ENCODE measurements at regions of chr17 and their contacts with region 1.

Region 1: DNA sequence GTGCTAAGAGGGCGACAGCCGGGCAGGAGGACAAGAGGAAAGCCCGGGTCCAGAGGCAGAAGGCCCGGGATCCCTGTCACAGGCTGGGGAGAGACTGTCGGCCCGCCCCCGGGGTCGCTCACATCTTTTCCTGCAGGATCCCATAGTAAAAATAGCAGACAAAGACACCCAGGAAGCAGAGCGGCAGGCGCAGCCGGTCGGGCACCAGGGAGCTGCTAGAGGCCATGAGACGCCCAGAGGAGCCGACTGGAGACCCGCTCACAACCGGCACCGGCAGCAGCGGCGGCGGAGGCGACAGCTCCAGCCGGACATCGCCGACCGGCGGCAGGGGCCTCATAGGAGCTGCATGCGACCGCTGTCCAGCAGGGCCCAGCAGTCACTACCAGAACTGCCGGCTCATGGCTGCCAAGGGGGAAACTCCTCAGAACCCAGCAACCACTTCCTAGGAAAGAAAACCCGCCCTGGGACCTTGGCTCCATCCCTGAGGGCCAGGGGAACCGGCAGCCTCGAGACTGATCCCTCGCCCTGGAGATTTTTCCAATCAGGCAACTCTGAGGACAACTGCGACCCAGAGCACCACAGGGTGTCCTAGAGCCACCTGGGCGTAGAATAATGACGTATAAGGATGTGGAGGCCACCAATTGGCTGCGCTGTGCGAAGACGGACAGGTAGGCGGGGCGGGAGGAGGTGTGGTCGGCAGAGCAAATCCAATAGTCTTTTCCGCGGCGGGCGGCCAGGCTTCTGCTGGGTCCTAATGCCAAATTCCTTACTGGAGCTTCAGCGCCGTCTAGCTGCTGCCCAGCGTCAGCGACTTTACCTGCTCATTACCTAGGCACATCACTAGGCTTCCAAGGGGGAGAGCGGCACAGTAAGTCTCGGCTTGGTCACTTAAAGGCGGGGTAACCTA is at the start of gene SLC35B1:
- DNase-seq: peak; percentile 94 to 99 (median 98)
- ATAC-seq: peak; percentile 97 to 98
- H3K4me3 Mint-ChIP-seq: peak within 1 kb of the TSS; percentile 89 to 99 (median 94)
- H3K27ac Mint-ChIP-seq: peak within 1 kb of the TSS; percentile 96 to 100 (median 98)
- H3K4me1 Mint-ChIP-seq: peaks cover 18 to 48% (median 47%) of the 10 kb centered on the region in 4 donors
- H3K27me3 Mint-ChIP-seq: no peaks in the 10 kb centered on the region
- polyA plus RNA-seq, gene SLC35B1: 20.3 to 27.4 (median 21.8) TPM

Region 2: DNA sequence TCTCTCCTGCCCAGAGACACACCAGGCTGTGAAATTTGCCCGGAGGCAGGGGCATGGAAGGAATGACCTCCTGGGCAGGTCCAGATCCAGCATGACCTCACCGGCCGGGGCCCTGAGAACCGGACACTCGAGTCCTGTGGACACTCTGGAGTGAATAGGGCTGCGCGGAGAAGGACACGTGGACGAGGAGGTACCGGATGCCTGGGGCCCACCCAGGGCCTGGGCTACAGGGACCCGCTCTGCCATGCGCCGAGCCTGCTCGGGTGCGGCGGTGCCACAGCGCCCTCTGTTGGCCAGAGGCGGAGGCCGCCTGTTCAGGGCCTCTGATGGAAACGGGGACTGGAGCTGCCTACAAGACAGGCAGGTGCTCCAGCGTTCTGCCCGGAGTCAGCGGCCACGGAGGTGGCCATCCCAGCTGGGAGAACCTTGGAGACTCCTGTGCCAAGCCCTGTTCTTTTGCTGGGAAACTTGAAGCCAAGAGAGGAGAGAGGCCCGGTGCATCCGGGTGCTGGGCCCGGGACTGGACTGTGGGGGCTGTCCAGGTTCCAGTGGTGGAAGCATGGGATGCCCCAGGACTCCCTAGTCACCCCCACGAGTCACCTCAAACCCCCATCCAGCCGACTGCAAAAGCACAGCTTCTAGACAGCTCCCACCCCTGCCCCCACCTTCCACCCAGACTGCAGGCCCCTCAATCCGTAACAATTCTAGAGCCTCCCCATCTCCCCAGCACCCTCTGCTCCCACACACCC is 151.5 kb before region 1 on chr17:
- POLR2A ChIA-PET with region 1: no interaction called
- DNase-seq: peak; percentile 72 to 89 (median 86)
- ATAC-seq: peak; percentile 99
- H3K4me3 Mint-ChIP-seq: peak overlapping the region in 1 of 10 donors; percentile 2
- H3K27ac Mint-ChIP-seq: peak overlapping the region in 1 of 10 donors; percentile 9
- H3K4me1 Mint-ChIP-seq: peaks cover 0 to 21% (median 5%) of the 10 kb centered on the region in 4 donors
- H3K27me3 Mint-ChIP-seq: peaks cover 2 to 10% (median 4%) of the 10 kb centered on the region in 5 donors

Region 3: GRCh38 chr17:49570564-49571242 is 137.2 kb before region 1 on chr17:
- POLR2A ChIA-PET with region 1: interaction called, 11 read pairs
- DNase-seq: no peak
- ATAC-seq: no peak
- H3K4me3 Mint-ChIP-seq: peak overlapping the region in 9 of 10 donors; percentile 7 to 92 (median 68)
- H3K27ac Mint-ChIP-seq: peak overlapping the region in 2 of 10 donors; percentile 31 to 74
- H3K4me1 Mint-ChIP-seq: peaks cover 7 to 20% (median 19%) of the 10 kb centered on the region in 4 donors
- H3K27me3 Mint-ChIP-seq: peaks cover 10 to 40% (median 33%) of the 10 kb centered on the region in 5 donors

Region 4: DNA sequence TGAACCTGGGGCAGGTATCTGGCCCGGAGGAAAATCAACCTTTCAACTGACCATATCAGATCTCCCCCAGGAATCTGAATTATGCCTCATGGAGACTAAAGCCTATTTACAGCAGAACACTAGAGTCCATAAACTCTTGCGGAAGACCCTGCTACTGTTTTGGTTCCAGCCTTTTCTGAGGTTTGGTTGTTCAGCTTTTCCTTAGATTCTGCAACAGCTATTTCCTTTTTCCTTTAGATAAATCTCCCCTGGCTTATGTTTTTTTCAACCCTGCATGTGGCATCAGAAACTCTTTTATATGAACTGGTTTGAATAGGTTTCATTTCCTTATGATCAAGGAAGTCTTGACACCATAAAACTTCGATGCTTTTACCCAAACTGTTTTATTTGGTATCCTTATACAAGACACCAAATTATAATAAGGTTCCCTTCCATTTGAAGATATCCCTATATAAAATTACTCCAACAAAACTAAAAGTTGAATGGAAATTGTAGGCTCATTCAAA is 43.1 kb before region 1 on chr17:
- POLR2A ChIA-PET with region 1: no interaction called
- DNase-seq: no peak
- ATAC-seq: no peak
- H3K4me3 Mint-ChIP-seq: peak overlapping the region in 5 of 10 donors; percentile 0 to 41 (median 12)
- H3K27ac Mint-ChIP-seq: peak overlapping the region; percentile 5 to 84 (median 58)
- H3K4me1 Mint-ChIP-seq: peaks cover 27 to 64% (median 61%) of the 10 kb centered on the region in 4 donors
- H3K27me3 Mint-ChIP-seq: no peaks in the 10 kb centered on the region

Region 5: DNA sequence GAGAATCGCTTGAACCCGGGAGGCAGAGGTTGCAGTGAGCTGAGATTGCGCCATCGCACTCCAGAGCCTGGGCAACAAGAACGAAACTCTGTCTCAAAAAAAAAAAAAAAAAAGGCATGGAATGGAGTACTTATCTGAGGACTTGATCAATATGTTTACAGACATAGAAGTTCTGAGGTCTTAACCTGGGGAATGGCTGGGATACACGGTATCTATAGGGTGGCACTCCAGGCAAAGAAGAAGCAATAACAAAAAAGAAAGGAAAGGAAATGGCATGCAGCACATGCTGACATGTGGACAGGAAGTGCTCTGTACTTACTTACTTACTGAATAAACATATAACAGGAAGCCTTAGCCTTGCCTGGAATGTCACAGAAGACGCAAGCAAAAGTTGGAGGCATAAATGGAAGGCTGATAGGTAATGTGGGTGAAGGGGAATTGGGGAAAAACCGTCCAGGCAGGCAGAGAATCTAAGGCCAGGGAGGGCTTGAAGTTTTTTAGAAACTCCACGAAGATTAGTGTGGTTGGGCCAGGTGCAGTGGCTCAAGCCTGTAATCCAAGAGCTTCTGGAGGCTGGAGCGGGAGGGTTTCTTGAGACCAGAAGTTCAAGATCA is 19.9 kb before region 1 on chr17:
- POLR2A ChIA-PET with region 1: interaction called, 10 read pairs
- DNase-seq: peak in 4 of 10 donors; percentile 23 to 58 (median 56)
- ATAC-seq: peak; percentile 95
- H3K4me3 Mint-ChIP-seq: peak overlapping the region; percentile 87 to 95 (median 93)
- H3K27ac Mint-ChIP-seq: peak overlapping the region; percentile 95 to 100 (median 98)
- H3K4me1 Mint-ChIP-seq: peaks cover 39 to 65% (median 52%) of the 10 kb centered on the region in 4 donors
- H3K27me3 Mint-ChIP-seq: no peaks in the 10 kb centered on the region

Region 6: DNA sequence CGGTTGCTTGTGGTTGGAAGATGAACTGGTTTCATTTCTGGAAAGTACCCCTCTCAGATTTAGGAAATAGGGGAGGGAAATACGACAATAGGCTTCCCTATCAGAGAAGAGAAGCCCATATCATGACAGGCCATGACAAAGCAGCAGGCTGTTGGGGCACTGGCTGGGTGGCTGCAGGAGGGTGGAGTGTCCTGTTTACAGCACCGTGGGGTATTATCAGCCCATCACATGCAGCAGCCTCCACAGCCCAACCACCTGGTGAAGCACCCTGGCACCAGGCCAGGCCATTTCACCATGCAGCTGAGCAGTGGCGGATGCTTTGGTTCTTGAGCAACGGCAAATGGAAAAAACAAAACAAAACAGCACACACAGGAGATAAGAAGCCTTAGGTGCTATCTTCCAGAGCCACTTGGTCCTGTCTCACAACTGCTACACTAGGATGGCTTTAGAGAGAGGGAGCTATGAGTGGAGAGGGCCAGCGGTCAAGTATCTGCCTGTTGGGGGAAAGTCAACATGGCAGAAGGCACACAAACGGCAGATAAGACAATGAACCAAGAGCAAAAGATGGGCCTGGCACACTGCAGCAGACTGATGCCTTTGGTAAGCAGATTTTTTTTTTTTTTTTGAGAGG is 31.9 kb after region 1 on chr17:
- POLR2A ChIA-PET with region 1: interaction called, 91 read pairs
- DNase-seq: peak; percentile 93 to 99 (median 96)
- ATAC-seq: peak; percentile 95 to 98
- H3K4me3 Mint-ChIP-seq: peak overlapping the region; percentile 82 to 97 (median 91)
- H3K27ac Mint-ChIP-seq: peak overlapping the region; percentile 97 to 100 (median 100)
- H3K4me1 Mint-ChIP-seq: peaks cover 51 to 98% (median 86%) of the 10 kb centered on the region in 4 donors
- H3K27me3 Mint-ChIP-seq: no peaks in the 10 kb centered on the region

Region 7: GRCh38 chr17:49748791-49749190 is 40.9 kb after region 1 on chr17:
- POLR2A ChIA-PET with region 1: interaction called, 91 read pairs
- DNase-seq: peak in 9 of 10 donors; percentile 34 to 64 (median 53)
- ATAC-seq: peak; percentile 67 to 78
- H3K4me3 Mint-ChIP-seq: peak overlapping the region; percentile 56 to 89 (median 81)
- H3K27ac Mint-ChIP-seq: peak overlapping the region; percentile 94 to 100 (median 96)
- H3K4me1 Mint-ChIP-seq: peaks cover 50 to 96% (median 80%) of the 10 kb centered on the region in 4 donors
- H3K27me3 Mint-ChIP-seq: no peaks in the 10 kb centered on the region

Region 8: GRCh38 chr17:49755663-49756283 is 47.9 kb after region 1 on chr17:
- POLR2A ChIA-PET with region 1: interaction called, 92 read pairs
- DNase-seq: no peak
- ATAC-seq: no peak
- H3K4me3 Mint-ChIP-seq: peak overlapping the region in 8 of 10 donors; percentile 32 to 70 (median 48)
- H3K27ac Mint-ChIP-seq: peak overlapping the region; percentile 81 to 93 (median 86)
- H3K4me1 Mint-ChIP-seq: peaks cover 32 to 88% (median 84%) of the 10 kb centered on the region in 4 donors
- H3K27me3 Mint-ChIP-seq: no peaks in the 10 kb centered on the region

Region 9: DNA sequence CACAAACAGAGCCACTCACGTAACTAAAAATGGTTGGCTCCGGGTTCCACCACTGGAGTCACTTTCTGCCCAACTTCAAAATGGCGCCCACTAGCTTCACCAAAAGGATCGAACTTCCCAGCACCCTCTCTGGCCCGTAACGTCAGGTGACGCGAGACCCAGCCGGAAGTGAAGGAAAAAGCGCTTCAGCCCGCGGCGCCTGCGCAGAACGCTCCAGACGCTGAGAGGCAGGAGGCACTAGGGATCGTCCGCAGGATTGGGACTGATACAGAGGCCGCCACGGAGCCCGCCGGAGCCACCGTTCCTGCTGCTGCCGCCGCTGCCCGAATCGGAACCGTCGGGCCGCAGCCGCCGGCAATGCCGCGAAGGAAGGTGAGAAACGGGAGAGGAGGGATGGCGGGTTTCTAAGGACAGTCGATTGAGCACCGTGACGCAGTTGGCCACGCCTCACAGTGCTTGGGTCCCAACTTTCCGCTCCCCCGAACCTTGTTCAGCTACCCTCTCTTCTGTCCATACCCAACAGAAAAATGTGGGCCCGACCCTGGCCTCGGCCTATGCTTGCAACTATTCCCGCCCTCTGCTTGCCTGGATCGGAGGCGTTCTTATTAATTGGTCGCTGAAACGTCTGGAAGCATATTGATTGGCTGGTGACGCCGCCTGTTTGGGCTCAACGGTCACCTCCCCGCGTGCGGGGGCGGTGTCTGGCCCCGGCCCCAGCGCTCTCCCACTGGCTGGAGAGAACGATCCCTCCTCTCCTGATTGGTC is 80.8 kb after region 1 on chr17 and contains the start of gene KAT7:
- POLR2A ChIA-PET with region 1: interaction called, 38 read pairs
- DNase-seq: peak; percentile 94 to 99 (median 99)
- ATAC-seq: peak; percentile 84 to 85
- H3K4me3 Mint-ChIP-seq: peak within 1 kb of the TSS; percentile 90 to 99 (median 97)
- H3K27ac Mint-ChIP-seq: peak within 1 kb of the TSS; percentile 94 to 100 (median 98)
- H3K4me1 Mint-ChIP-seq: peaks cover 18 to 63% (median 53%) of the 10 kb centered on the region in 4 donors
- H3K27me3 Mint-ChIP-seq: no peaks in the 10 kb centered on the region
- polyA plus RNA-seq, gene KAT7: 34.4 to 51.1 (median 39.2) TPM

Region 10: DNA sequence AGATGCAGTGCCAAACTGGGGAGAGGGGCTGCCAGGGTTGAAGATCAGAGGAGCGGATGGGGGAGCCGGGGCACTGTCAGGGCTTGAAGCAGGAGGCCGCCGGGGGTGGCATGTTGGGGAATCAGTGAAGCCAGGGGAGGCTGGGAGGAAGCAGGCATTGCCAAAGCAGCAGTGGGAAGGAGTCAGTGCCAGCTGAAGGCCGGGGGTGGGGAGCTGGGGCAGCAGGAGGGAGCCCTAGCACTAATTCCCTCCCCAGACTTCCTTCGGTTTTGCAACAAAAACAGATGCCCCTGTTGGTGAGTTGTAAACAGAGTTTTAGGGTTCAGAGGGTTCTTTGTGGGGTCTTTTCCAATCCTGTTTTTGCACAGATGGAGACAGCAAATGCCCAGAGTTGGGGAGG is 150.9 kb after region 1 on chr17:
- POLR2A ChIA-PET with region 1: no interaction called
- DNase-seq: no peak
- ATAC-seq: no peak
- H3K4me3 Mint-ChIP-seq: no peak overlapping the region
- H3K27ac Mint-ChIP-seq: peak overlapping the region in 1 of 10 donors; percentile 33
- H3K4me1 Mint-ChIP-seq: peaks cover 3 to 7% (median 6%) of the 10 kb centered on the region in 4 donors
- H3K27me3 Mint-ChIP-seq: peaks cover 4 to 13% (median 7%) of the 10 kb centered on the region in 5 donors